ENCODE measurements at regions of chr17 and their contacts with region 1.

Region 1: DNA sequence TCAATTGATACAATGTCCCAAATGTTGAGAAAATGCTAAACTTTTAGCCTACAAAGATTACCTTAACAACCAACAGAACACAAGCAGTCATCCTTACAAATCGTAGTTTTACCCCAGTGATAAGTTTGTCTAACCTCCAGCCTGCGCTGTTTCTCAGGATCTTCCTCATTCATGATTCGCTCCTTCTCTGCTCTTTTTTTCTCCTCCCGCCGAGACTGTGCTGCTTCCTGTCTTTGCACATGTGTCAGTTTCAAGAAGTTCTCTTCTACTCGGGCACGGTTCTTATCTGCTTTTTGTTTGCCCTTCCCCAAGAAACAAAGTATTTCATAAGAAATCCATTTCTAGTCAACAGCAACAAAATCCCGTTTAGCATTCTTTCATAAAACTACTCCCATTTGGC is 10.2 kb upstream of the STRADA start:
- DNase-seq: no peak
- ATAC-seq: no peak

Region 2: GRCh38 chr17:63798572-63799106 is 46.8 kb after region 1 on chr17:
- intact Hi-C with region 1: no loop called
- DNase-seq: no peak
- ATAC-seq: no peak

Region 3: DNA sequence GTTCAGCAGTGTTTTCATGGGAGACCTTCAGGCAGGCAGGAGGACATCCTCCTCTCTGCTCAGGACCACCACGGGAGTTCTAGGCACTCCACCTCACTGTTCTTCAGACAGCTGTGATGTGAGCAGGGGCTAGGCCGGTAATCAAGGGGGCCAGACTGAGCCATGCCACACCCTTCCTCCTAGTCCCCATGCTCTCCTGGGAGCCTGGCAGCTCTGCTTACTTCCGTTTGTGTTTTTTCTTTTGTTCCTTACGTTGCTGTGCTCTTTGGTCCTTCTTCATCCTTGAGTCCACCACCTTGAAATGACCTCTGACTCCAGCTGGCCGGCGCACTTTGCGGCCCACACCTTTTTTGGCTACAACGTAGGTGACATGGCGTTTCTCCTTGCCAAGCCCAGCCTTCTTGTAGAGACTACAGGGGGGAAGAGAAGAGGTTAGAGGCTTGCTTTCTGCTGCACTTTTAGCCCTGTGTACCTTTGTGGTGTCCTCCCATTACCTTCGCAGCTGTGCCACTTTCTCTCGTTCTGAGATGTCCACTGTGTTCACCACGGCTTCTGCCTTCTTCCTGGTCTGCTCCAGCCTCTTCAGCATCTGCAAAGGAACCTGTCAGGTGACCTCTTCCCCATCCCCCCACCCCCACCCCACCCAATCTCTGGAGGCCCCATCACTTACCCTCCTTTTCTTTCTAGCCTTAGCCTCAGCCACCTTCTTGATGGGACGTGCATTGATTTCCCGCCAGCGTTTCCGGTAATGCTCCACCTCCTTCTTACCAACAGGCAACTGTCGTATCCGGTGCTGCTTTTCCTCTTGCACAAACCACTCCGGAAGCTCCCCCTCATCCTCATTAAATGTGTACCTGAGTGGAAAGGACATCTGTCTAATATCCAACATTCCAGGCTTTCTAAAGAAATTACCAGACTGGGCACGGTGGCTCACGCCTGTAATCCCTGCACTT is 68.1 kb after region 1 on chr17:
- intact Hi-C with region 1: loop called in 1 of 2 experiments (anchors 10 kb)
- DNase-seq: no peak
- ATAC-seq: peak in 1 of 2 donors; percentile 8